ENCODE measurements at regions of chr15 and their contacts with region 1.

Region 1: GRCh38 chr15:98518823-98519561 is 129.3 kb upstream of the IGF1R start:
- DNase-seq: no peak
- H3K4me3 ChIP-seq: no peak overlapping the region
- H3K27ac ChIP-seq: no peak overlapping the region
- H3K4me1 ChIP-seq: peaks cover 0 to 10% (median 6%) of the 10 kb centered on the region in 6 donors
- H3K27me3 ChIP-seq: peaks cover 0 to 11% (median 0%) of the 10 kb centered on the region in 7 donors
- CTCF ChIP-seq: peak; percentile 65 to 84 (median 73)
- POLR2A ChIP-seq: no peak

Region 2: GRCh38 chr15:98123834-98124474 is 395.0 kb before region 1 on chr15:
- intact Hi-C with region 1: no loop called
- DNase-seq: no peak
- H3K4me3 ChIP-seq: no peak overlapping the region
- H3K27ac ChIP-seq: no peak overlapping the region
- H3K4me1 ChIP-seq: no peaks in the 10 kb centered on the region
- H3K27me3 ChIP-seq: no peaks in the 10 kb centered on the region
- CTCF ChIP-seq: no peak
- POLR2A ChIP-seq: no peak

Region 3: GRCh38 chr15:98658831-98659699 is 140.1 kb after region 1 on chr15:
- intact Hi-C with region 1: loop called (anchors 10 kb)
- DNase-seq: no peak
- H3K4me3 ChIP-seq: no peak overlapping the region
- H3K27ac ChIP-seq: no peak overlapping the region
- H3K4me1 ChIP-seq: peaks cover 0 to 86% (median 26%) of the 10 kb centered on the region in 6 donors
- H3K27me3 ChIP-seq: no peaks in the 10 kb centered on the region
- CTCF ChIP-seq: peak; percentile 33 to 82 (median 74)
- POLR2A ChIP-seq: no peak

Region 4: DNA sequence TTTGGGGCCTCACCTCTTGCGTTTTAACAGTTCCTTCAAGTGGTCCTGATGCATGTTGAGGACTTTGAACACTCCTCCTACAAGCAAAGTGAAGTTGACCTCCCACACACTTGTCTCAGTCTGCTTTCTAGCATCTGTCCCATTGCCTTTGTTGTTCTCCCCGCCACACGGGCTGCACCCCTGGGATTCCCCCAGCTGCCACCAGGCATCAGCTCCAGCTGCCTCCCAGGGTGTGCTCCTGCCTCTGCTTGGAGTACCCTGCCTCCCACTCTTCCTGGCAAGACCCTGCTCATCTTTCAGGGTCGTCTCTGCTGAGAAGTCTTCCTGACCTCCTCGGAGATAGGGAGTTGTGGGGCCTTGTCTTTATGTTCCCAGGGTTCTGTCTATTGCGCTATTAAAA is 181.5 kb after region 1 on chr15:
- intact Hi-C with region 1: no loop called
- DNase-seq: no peak
- H3K4me3 ChIP-seq: no peak overlapping the region
- H3K27ac ChIP-seq: no peak overlapping the region
- H3K4me1 ChIP-seq: peaks cover 0 to 78% (median 28%) of the 10 kb centered on the region in 6 donors
- H3K27me3 ChIP-seq: no peaks in the 10 kb centered on the region
- CTCF ChIP-seq: no peak
- POLR2A ChIP-seq: no peak

Region 5: DNA sequence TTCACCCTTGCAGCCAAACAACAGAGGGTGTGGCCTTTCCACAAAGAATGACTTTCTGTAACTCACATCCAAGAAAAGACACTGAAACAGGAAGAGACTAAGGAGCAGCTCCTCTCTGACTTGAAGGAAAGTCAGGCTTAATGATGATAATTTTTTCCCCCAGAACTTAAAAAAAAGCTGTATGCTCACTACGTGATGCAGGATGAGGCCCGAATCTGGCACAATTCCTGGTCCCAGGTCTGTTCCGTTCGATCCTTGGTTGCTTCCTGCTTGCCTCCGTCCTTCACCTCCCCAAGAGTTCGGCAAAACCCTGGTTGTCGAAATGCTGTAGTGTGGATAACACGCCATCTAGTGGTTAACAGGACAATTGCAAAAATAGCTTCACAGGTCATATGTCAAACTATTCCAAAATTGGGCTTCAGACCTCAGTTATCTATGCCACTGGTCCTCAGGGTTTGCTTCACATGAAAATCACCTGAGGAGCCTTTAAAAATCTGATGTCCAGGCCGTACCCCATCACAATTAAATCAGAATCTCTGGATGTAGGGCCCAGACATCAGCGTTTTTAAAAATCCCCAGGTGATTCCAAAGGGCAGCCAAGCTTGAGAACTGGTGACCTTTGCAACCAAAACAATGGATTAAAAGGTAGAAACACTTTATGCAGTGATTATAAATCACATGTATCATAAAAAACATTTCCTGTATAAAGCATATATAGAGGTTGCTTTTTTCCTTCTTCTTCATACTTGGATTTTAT is 557.7 kb after region 1 on chr15:
- intact Hi-C with region 1: loop called (anchors 10 kb)
- DNase-seq: no peak
- H3K4me3 ChIP-seq: peak overlapping the region in 6 of 8 donors; percentile 19 to 62 (median 28)
- H3K27ac ChIP-seq: peak overlapping the region in 3 of 8 donors; percentile 11 to 53 (median 22)
- H3K4me1 ChIP-seq: peaks cover 0 to 9% (median 8%) of the 10 kb centered on the region in 6 donors
- H3K27me3 ChIP-seq: peaks cover 0 to 10% (median 0%) of the 10 kb centered on the region in 7 donors
- CTCF ChIP-seq: peak; percentile 62 to 90 (median 86)
- POLR2A ChIP-seq: no peak

Region 6: DNA sequence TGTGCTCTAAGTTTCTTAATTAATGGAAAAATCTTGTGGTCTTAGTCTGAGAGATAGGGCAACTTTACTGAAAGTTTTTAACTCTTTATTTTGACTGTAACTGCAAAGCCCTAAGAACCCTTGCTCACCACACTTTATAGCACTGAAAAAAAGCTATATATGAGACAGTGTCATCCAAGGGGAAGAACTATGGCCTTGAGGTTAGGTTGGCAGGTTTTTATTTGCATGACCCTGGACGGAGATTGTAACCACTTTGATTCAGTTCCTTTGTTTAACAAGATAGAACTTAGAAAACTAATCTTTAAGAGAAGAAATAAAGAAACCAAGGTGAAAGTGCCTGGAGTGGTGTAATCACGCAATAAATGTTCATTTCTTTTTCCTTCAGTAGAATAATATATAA is 1244.8 kb after region 1 on chr15:
- intact Hi-C with region 1: no loop called
- DNase-seq: no peak
- H3K4me3 ChIP-seq: no peak overlapping the region
- H3K27ac ChIP-seq: no peak overlapping the region
- H3K4me1 ChIP-seq: peaks cover 0 to 5% (median 0%) of the 10 kb centered on the region in 6 donors
- H3K27me3 ChIP-seq: no peaks in the 10 kb centered on the region
- CTCF ChIP-seq: no peak
- POLR2A ChIP-seq: no peak